ENCODE measurements at regions of chr1 and their contacts with region 1.

Region 1: DNA sequence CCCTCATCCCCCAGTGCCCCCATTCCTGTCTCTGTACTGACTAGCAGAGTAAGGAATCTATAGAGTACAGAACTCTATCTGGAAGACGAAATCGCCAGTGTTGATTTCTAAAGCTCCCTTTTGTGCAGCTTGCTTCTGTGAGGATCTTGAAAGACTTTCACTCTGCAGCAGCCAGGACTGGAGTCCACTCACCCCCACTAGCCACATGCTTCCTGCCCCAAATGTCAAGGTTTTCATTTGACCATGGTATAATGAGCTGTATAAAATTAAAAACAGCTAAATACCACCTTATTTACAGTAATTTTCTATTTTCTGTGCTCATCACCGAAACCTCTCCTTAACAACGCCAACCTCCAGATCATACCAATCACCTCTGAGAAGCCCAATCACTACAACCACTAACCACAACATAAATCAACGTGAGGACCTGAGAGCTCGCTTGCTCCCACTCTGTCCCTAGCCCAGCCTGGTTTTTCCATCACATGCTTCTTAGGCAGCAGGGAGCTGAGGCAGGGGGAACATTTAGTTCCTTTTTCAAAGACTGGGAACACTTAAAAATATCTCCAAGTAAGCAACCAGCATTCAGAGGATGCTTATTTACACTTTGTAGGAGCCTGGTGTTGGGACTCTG is 56.1 kb upstream of the IRF2BP2 start:
- DNase-seq: no peak
- H3K4me3 ChIP-seq: no peak overlapping the region
- H3K27ac ChIP-seq: peak overlapping the region in 3 of 4 donors; percentile 14 to 42 (median 28)
- H3K4me1 ChIP-seq: peaks cover 0 to 4% (median 0%) of the 10 kb centered on the region in 4 donors
- H3K27me3 ChIP-seq: no peaks in the 10 kb centered on the region
- CTCF ChIP-seq: no peak
- EP300 ChIP-seq: no peak
- POLR2A ChIP-seq: no peak

Region 2: DNA sequence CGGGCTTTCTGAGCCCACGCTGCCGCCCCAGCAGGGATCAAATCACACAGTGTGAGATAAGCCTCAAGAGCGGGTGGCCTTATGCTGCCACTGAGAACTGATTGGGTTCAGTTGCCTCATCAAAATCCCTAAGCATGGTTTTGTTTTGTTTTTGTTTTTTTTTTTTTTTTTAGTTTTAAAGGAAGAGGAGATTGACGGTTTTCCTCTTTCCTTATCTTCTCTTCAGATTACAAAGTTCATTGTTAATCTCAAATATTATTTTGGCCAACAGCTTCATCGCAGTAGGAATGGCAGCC is 292.2 kb before region 1 on chr1:
- in situ Hi-C with region 1: no loop called
- intact Hi-C with region 1: no loop called
- DNase-seq: no peak
- H3K4me3 ChIP-seq: peak overlapping the region; percentile 70 to 91 (median 76)
- H3K27ac ChIP-seq: peak overlapping the region; percentile 91 to 97 (median 95)
- H3K4me1 ChIP-seq: peaks cover 8 to 24% (median 14%) of the 10 kb centered on the region in 4 donors
- H3K27me3 ChIP-seq: no peaks in the 10 kb centered on the region
- CTCF ChIP-seq: no peak
- EP300 ChIP-seq: no peak
- POLR2A ChIP-seq: no peak

Region 3: DNA sequence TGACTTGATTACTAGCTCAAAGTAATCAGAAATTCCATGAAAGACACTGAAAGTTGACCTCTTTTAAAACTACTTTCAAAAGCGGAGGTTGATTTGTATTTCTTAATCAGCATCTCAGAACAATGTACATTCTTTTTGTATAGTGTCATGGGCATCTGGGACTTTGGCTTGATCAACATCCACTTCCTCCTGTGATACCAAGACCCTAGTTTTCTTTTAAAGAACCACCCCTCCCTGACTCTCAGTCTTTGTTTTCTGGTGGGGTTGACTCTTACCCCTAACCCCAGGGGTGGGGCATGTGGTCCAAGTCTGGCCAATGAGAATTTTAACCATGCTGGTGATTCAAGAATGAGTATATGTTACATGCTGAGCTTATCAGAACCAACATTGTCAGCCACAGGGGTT is 34.4 kb before region 1 on chr1:
- in situ Hi-C with region 1: no loop called
- intact Hi-C with region 1: loop called (anchors 2 kb)
- DNase-seq: no peak
- H3K4me3 ChIP-seq: no peak overlapping the region
- H3K27ac ChIP-seq: no peak overlapping the region
- H3K4me1 ChIP-seq: peaks cover 0 to 3% (median 0%) of the 10 kb centered on the region in 4 donors
- H3K27me3 ChIP-seq: no peaks in the 10 kb centered on the region
- CTCF ChIP-seq: no peak
- EP300 ChIP-seq: no peak
- POLR2A ChIP-seq: no peak

Measured in transverse colon (tissue), 4 donors.